Activated naive CD8-positive, alpha-beta T cell treated with anti-CD3 and anti-CD28 coated beads, Interleukin-2, amount 10 ng/mL, durations not matched to agents 7 days and 5 days (primary cell): ENCODE measurements at regions of chr10 and their contacts with region 1.

Region 1: GRCh38 chr10:26468700-26469099 is 30.6 kb downstream of the APBB1IP start:
- DNase-seq: peak; percentile 66
- ATAC-seq: peak; percentile 82
- H3K4me3 Mint-ChIP-seq: peak overlapping the region; percentile 81
- H3K27ac Mint-ChIP-seq: peak overlapping the region; percentile 87
- H3K4me1 Mint-ChIP-seq: peaks cover 73% of the 10 kb centered on the region
- H3K27me3 Mint-ChIP-seq: no peaks in the 10 kb centered on the region

Region 2: DNA sequence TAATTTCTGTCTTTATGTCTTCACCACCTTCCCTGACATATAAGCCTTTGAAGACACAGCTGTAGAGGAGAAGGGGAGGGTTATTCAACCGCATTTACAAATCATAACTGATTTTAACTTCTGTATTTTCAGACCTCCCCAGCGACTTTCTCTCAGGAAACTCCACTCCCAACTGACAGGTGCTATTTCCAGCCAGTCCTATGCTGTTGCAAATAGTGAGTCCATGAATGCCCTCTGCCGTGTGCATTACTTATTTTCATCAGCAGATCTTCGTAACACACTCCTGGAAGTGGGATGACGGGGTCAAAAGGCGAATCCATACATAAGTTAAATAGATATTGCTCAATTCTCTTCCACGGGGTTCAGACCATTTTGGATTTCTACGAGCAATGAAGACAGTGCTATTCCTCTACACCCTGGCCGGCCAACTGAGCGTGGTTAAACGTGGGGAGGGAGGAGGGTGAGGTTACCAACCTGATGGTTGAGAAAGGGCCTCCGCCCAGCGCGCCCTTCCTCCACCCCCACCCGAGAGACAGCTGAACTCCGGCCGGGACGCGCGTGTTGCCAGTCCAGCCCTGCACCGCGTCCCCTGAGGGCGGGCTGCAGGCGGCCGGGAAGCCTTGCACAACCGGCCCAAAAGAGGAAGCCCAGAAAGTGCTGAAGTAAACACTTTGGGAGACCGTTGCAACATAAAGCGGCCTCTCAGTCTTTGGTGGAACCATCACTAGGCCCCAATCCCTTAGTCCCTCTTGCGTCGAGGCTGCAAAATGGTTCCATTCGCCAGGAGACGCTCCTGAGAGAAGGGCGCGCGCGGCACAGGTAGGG is 30.9 kb before region 1 on chr10 and contains the start of gene APBB1IP:
- POLR2A ChIA-PET with region 1: interaction called, 15 read pairs
- DNase-seq: peak; percentile 74
- ATAC-seq: peak; percentile 56
- H3K4me3 Mint-ChIP-seq: peak within 1 kb of the TSS; percentile 88
- H3K27ac Mint-ChIP-seq: peak within 1 kb of the TSS; percentile 92
- H3K4me1 Mint-ChIP-seq: peaks cover 38% of the 10 kb centered on the region
- H3K27me3 Mint-ChIP-seq: no peaks in the 10 kb centered on the region
- total RNA-seq, gene APBB1IP: 81.1 to 88.7 TPM

Region 3: GRCh38 chr10:26448706-26449435 is 19.8 kb before region 1 on chr10:
- POLR2A ChIA-PET with region 1: interaction called, 13 read pairs
- DNase-seq: peak; percentile 71
- ATAC-seq: peak; percentile 71
- H3K4me3 Mint-ChIP-seq: peak overlapping the region; percentile 75
- H3K27ac Mint-ChIP-seq: peak overlapping the region; percentile 91
- H3K4me1 Mint-ChIP-seq: peaks cover 64% of the 10 kb centered on the region
- H3K27me3 Mint-ChIP-seq: no peaks in the 10 kb centered on the region

Region 4: DNA sequence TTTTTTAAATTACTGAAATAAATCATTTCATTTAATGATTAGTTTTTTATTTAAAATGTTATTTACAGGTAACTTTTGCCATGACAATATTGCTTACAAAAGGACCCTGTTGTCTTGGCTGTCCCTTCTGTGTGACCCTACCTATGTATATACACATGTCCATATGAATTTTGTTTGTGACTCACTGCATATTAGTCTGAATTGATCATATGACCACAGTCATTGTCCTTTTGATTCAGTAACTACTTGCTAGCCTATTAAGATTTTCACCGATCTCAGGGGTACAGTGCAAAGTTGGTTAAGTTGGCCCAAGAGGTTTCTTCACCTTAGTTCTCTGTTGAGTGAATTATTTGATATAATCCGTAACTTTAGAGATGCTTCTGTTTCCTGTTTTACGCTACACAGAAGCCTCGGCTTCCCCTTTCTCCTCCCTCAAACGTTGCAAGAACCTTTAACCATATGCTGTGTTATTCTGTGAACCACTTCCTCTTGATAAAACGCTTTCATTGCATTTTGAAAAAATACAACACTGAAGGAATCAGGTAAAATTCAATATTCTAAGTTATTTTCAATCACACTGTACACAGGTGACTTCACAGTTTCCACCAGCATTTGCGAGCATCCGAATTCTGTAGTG is 13.3 kb after region 1 on chr10:
- POLR2A ChIA-PET with region 1: interaction called, 20 read pairs
- DNase-seq: no peak
- ATAC-seq: peak; percentile 66
- H3K4me3 Mint-ChIP-seq: peak overlapping the region; percentile 74
- H3K27ac Mint-ChIP-seq: peak overlapping the region; percentile 94
- H3K4me1 Mint-ChIP-seq: peaks cover 65% of the 10 kb centered on the region
- H3K27me3 Mint-ChIP-seq: no peaks in the 10 kb centered on the region

Region 5: GRCh38 chr10:26528715-26529393 is 60.2 kb after region 1 on chr10:
- POLR2A ChIA-PET with region 1: no interaction called
- DNase-seq: no peak
- ATAC-seq: no peak
- H3K4me3 Mint-ChIP-seq: no peak overlapping the region
- H3K27ac Mint-ChIP-seq: no peak overlapping the region
- H3K4me1 Mint-ChIP-seq: peaks cover 18% of the 10 kb centered on the region
- H3K27me3 Mint-ChIP-seq: no peaks in the 10 kb centered on the region

Region 6: GRCh38 chr10:26588611-26589010 is 119.9 kb after region 1 on chr10:
- POLR2A ChIA-PET with region 1: no interaction called
- DNase-seq: no peak
- ATAC-seq: no peak
- H3K4me3 Mint-ChIP-seq: no peak overlapping the region
- H3K27ac Mint-ChIP-seq: no peak overlapping the region
- H3K4me1 Mint-ChIP-seq: peaks cover 2% of the 10 kb centered on the region
- H3K27me3 Mint-ChIP-seq: peaks cover 2% of the 10 kb centered on the region